ENCODE measurements at regions of chr6 and their contacts with region 1.

Region 1: GRCh38 chr6:157068691-157069324 is 254.5 kb downstream of the TMEM242 start:
- DNase-seq: no peak
- ATAC-seq: peak; percentile 90
- H3K4me3 Mint-ChIP-seq: peak overlapping the region; percentile 41
- H3K27ac Mint-ChIP-seq: peak overlapping the region; percentile 81
- H3K4me1 Mint-ChIP-seq: peaks cover 44% of the 10 kb centered on the region
- H3K27me3 Mint-ChIP-seq: no peaks in the 10 kb centered on the region

Region 2: GRCh38 chr6:156963712-156964700 is 104.8 kb before region 1 on chr6:
- CTCF ChIA-PET with region 1: no interaction called
- DNase-seq: peak; percentile 65
- ATAC-seq: peak; percentile 85
- H3K4me3 Mint-ChIP-seq: peak overlapping the region; percentile 45
- H3K27ac Mint-ChIP-seq: no peak overlapping the region
- H3K4me1 Mint-ChIP-seq: peaks cover 18% of the 10 kb centered on the region
- H3K27me3 Mint-ChIP-seq: no peaks in the 10 kb centered on the region

Region 3: DNA sequence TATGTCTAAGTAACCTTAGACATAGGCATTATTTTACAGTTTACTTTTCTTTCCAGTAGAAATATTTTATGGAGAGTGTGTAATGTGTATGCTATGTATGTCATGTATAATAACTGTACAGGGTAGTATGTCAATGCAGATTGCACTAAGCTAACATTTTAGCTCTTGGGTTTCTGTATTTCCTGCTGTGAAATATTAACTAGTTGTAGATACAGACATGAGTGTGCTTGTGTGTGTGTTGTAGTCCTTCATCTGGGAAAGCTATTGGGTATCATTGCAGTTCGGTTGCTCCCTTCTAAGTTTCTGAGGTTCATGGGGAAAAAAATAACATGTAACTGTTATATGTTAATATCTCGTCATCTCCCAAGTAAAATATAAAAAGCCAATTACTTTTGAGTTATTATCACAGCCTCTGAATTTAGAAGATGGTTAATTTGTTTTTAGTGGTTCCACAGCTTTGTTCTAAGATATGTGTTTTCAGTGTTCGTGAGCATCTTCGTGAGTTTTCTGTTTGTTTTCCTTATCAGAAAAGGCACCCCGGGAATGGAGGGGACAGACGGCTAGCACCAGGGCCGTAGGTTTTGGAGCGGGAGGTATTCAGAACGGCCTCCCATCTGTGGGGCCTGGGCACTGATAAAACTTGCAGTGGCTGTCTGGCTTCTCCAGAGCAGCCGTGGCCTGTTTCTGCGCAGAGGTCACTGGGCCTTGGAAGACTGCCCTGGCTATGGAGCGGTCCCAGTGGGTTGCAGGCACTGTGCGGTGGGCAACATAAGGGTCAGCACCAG is 76.6 kb before region 1 on chr6:
- CTCF ChIA-PET with region 1: no interaction called
- DNase-seq: no peak
- ATAC-seq: no peak
- H3K4me3 Mint-ChIP-seq: no peak overlapping the region
- H3K27ac Mint-ChIP-seq: no peak overlapping the region
- H3K4me1 Mint-ChIP-seq: peaks cover 14% of the 10 kb centered on the region
- H3K27me3 Mint-ChIP-seq: no peaks in the 10 kb centered on the region

Region 4: DNA sequence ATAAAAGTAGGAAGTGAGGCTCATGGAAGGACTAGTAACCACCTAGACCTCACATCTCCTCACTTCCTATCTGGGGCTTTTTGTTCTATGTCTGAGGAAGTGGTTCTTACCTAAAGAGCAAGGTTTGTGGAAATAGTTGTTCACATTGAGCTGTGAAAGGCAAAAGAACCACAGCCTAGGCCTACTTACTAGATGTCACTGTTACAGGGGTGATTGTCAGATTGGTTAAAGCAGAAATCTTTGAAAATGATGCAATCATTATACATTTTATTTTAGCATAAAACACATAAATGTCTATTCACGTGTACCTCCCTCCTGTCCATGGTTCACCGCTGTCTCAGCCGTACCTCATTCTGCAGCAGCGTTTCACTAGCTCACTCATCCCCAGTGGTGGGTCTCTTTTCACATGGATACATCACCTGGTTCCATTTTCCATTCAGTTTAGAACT is 14.3 kb before region 1 on chr6:
- CTCF ChIA-PET with region 1: interaction called, 27 read pairs
- DNase-seq: peak; percentile 65
- ATAC-seq: peak; percentile 97
- H3K4me3 Mint-ChIP-seq: peak overlapping the region; percentile 28
- H3K27ac Mint-ChIP-seq: peak overlapping the region; percentile 92
- H3K4me1 Mint-ChIP-seq: peaks cover 30% of the 10 kb centered on the region
- H3K27me3 Mint-ChIP-seq: no peaks in the 10 kb centered on the region